GM10248 (cell line): ENCODE measurements at regions of chr5 and their contacts with region 1.

Region 1: DNA sequence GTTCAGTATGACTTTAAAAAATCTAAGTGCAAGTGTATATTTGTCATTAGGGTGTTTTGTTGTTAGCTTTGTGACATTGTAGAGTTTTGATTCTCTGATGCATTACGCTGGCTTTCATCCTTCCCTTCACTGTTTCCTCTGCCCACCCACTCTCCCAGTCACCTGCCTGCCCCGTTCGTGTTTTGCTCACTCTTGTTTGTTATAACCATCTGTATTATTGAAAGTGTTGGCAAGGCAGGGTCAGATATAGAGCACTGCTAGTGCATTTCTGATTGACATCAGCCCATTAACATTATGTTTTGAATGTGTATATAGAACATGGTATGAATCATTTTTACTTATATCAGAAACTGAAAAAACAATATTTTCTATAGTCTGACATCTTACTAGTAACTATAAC is 27.3 kb downstream of the SCGB3A1 start:
- DNase-seq: no peak
- CTCF ChIP-seq: no peak

Region 2: GRCh38 chr5:180575571-180575970 is 11.6 kb after region 1 on chr5:
- CTCF ChIA-PET with region 1: interaction called, 21 read pairs
- POLR2A ChIA-PET with region 1: no interaction called
- DNase-seq: no peak
- CTCF ChIP-seq: no peak